Cardiac septum (tissue), 1 donor: ENCODE measurements at regions of chr3 and their contacts with region 1.

Region 1: GRCh38 chr3:4350789-4351163 is 47.6 kb downstream of the SETMAR start:
- DNase-seq: no peak

Region 2: DNA sequence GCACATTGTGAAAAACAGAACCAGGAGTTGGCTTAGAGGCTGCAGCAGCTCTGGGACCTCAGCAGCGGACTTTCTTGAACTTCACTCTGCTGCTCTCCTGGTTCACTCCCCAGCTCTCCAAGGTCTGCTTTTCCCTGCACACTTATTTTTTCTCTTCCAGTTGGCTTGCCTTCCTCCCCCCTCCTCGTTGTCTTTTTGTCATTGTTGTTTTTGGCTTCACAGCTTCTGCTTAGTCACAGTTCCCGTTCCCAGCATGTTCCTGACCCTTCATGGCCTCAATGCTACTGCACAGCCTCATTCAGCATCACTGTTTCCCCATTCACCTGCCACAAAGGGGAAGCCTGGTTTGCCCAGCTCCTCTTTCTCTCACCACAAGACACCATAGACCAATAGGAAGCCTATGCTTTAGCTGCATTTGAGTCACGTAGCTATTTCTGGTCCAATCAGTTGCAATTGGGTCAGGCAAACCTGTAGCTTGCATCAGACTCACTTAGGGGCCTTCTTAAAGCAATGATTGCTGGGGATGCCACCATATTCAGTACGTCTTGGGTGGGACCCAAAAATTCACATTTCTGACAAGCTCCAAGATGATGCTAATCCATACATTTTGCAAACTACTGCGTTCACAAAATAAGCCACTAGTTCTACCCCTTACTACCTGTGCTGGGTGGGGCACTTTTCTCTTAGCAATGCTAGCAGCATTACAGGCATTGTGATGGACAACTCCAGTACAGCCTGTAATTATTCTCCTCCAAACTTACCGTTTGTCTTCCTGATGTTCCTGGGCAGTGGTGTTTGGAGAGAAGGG is 124.1 kb after region 1 on chr3:
- intact Hi-C with region 1: loop called (anchors 5 kb)
- DNase-seq: peak; percentile 90

Region 3: GRCh38 chr3:4584456-4585249 is 233.9 kb after region 1 on chr3:
- intact Hi-C with region 1: loop called (anchors 2 kb)
- DNase-seq: no peak

Region 4: DNA sequence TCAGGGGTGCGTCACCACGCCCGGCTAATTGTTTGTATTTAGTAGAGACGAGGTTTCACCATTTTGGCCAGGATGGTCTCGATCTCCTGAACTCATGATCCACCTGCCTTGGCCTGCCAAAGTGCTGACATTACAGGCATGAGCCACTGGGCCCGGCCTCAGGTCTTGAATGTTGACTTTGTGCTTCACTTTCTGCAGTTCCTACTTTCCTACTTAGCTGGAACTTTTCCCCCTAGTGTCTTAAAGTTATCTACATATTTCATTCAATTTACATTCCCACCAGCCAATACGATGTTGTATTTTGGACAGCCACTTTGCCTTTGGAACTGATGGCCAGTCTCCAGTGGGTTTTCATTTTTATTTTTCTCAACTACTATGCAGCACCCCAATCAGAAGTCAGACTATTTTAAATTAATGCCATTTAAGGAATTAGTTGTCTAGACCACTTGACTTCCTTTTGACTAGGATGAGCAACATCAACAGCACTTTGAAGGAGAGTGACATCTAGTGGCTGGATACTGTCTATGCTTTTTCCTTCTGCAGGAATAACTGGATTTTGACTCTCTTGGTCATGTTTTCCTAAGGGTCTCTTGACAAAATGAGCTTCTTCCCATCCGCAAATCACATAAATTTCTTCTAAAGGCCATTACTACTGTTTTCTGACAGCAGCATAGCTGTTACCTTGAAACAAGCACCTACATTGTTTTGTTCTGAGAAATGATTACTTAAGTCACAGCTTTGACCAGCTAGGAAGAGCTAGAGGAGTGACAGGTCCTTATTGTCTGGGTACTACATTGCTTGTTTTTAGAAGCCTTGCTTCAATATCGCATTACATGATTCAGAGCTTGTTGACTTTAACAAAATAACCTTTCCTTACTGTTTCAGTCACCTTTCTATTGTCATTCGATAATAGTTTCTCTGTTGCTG is 282.6 kb after region 1 on chr3:
- intact Hi-C with region 1: loop called (anchors 1 kb)
- DNase-seq: no peak